Mucosa of descending colon (tissue), 3 donors: ENCODE measurements at regions of chr17 and their contacts with region 1.

Region 1: DNA sequence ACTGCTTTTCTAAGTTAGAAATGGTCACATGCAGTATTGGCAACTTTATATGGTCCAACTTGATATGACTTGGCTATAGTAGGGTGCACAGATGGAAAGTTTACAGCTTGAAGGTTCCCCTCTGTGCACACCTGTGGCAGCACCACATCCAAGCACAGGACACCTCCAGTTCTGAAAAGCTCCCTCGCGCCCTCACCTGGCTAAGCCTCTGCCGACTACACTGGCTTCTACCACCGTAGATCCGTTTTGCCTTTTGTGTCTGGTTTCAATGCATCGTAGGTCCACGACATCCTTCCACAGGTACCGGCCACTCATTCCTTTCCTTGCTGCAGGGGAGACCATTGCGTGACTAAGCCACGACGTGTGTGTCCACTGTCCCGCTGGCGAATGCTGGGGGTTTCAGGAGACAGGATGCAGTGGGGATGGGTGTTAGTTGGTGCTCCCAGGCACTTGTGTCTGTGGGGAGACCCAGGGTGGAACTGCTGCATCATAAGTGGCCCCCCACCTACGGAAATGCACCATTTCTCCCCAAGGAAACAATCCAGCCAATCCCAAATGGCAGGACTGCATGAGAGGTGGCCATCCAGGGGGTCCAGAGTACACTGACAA is 4.9 kb upstream of the RASD1 start:
- DNase-seq: peak in 1 of 3 donors; percentile 29
- ATAC-seq: no peak
- H3K4me3 ChIP-seq: no peak overlapping the region
- H3K4me1 ChIP-seq: no peaks in the 10 kb centered on the region
- CTCF ChIP-seq: no peak

Region 2: DNA sequence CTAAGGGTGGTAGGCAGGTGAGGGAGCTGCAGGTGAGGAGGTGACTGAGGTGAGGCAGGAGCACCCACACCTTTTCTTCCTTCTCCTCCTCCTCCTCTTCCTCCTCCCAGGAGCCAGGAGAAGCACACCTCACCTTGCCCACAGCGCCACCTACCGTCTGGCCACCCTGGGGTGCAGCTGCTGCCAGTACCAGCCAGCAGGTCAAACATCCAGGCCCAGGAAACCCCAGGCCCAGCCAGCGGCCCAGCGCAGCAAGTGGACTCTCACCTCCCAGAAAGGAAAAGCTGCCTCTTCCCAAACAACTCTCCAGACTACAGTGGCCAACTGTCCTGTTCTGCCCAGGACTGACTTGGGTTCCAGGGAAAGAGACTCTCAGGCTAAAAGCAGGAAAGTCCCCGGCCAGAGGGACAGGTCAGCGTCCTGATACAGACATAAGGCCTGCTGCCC is 67.7 kb after region 1 on chr17:
- intact Hi-C with region 1: loop called in 1 of 2 experiments (anchors 10 kb)
- DNase-seq: peak; percentile 78 to 91 (median 90)
- ATAC-seq: peak; percentile 78
- H3K4me3 ChIP-seq: no peak overlapping the region
- H3K4me1 ChIP-seq: peaks cover 9% of the 10 kb centered on the region
- CTCF ChIP-seq: peak; percentile 56

Region 3: GRCh38 chr17:17628388-17629008 is 127.4 kb after region 1 on chr17:
- intact Hi-C with region 1: loop called in 1 of 2 experiments (anchors 10 kb)
- DNase-seq: peak; percentile 64 to 69 (median 65)
- ATAC-seq: peak; percentile 94
- H3K4me3 ChIP-seq: no peak overlapping the region
- H3K4me1 ChIP-seq: peaks cover 4% of the 10 kb centered on the region
- CTCF ChIP-seq: no peak

Region 4: DNA sequence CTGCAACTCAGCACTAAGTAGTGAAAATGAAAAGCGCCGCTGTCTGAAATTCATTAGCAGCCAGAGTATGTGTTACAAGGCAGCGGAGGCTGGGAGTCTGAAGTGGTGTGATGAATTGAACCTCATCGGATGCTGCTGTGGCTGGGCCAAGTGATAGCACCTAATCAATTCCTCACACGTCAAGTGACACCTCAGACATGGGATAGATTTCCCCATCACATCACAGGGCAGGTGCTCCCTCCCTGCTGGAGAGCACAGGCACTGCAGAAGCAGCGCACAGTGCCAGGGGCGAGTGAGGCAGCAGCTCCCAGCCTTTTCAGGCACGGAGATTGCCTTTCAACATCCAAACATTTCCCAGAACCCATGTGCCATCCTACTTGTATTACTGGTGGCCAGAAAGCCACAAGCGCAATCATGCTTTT is 503.8 kb after region 1 on chr17:
- intact Hi-C with region 1: no loop called
- DNase-seq: no peak
- ATAC-seq: peak; percentile 29
- H3K4me3 ChIP-seq: no peak overlapping the region
- H3K4me1 ChIP-seq: no peaks in the 10 kb centered on the region
- CTCF ChIP-seq: no peak